Panc1 (cell line): ENCODE measurements at regions of chr17 and their contacts with region 1.

Region 1: DNA sequence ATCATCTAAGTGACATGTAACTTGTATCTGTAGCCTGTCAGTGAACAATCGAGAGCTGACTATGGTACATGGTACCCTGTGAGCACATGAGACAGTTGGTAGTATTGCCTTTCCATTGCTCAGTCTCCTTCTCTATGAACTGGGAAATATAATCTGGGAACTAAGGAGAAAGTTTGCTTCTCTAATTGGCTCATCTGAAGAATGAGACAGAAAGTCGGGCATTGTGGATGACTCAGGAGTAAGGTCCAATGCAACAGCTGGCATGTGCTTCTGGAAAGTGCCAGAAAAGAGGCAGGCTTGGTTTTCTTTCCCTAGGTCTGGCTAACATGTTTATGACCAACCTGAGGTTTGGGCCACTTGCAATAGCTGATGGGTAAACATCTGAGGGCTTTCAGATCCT is 51.9 kb downstream of the ZZEF1 start:
- DNase-seq: no peak
- ATAC-seq: no peak
- H3K4me3 ChIP-seq: no peak overlapping the region
- H3K27ac ChIP-seq: no peak overlapping the region
- H3K4me1 ChIP-seq: no peaks in the 10 kb centered on the region
- H3K27me3 ChIP-seq: no peaks in the 10 kb centered on the region
- CTCF ChIP-seq: no peak

Region 2: DNA sequence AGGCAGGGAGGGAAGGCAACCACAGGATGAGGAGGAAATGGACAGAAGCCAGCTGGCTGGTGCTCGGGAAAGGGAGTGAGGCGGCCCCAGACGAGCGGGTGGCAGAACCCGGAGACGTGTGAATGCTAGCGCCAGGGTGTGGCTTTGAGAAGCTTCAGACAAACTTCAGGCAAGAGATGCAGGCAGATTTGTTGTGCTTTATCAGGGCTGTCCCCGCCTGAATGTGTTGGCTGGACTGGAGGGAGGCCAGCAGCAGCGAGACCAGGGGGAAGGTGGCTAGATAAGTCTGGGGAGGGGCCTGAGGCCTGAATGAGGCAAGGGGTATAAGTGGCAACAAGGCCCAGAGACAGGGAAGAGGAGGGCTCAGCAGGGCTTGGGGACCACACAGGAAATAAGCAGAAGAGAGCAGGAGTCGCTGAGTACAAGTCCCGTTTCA is 220.0 kb before region 1 on chr17:
- CTCF ChIA-PET with region 1: no interaction called
- POLR2A ChIA-PET with region 1: no interaction called
- in situ Hi-C with region 1: no loop called
- intact Hi-C with region 1: no loop called
- DNase-seq: no peak
- ATAC-seq: no peak
- H3K4me3 ChIP-seq: no peak overlapping the region
- H3K27ac ChIP-seq: no peak overlapping the region
- H3K4me1 ChIP-seq: no peaks in the 10 kb centered on the region
- H3K27me3 ChIP-seq: no peaks in the 10 kb centered on the region
- CTCF ChIP-seq: no peak

Region 3: GRCh38 chr17:4345581-4346252 is 254.8 kb after region 1 on chr17:
- CTCF ChIA-PET with region 1: no interaction called
- POLR2A ChIA-PET with region 1: interaction called, 13 read pairs
- in situ Hi-C with region 1: no loop called
- intact Hi-C with region 1: no loop called
- DNase-seq: no peak
- ATAC-seq: no peak
- H3K4me3 ChIP-seq: no peak overlapping the region
- H3K27ac ChIP-seq: no peak overlapping the region
- H3K4me1 ChIP-seq: peaks cover 6% of the 10 kb centered on the region
- H3K27me3 ChIP-seq: no peaks in the 10 kb centered on the region
- CTCF ChIP-seq: no peak